Dorsolateral prefrontal cortex (tissue), 120 donors: ENCODE measurements at regions of chr4 and their contacts with region 1.

Region 1: DNA sequence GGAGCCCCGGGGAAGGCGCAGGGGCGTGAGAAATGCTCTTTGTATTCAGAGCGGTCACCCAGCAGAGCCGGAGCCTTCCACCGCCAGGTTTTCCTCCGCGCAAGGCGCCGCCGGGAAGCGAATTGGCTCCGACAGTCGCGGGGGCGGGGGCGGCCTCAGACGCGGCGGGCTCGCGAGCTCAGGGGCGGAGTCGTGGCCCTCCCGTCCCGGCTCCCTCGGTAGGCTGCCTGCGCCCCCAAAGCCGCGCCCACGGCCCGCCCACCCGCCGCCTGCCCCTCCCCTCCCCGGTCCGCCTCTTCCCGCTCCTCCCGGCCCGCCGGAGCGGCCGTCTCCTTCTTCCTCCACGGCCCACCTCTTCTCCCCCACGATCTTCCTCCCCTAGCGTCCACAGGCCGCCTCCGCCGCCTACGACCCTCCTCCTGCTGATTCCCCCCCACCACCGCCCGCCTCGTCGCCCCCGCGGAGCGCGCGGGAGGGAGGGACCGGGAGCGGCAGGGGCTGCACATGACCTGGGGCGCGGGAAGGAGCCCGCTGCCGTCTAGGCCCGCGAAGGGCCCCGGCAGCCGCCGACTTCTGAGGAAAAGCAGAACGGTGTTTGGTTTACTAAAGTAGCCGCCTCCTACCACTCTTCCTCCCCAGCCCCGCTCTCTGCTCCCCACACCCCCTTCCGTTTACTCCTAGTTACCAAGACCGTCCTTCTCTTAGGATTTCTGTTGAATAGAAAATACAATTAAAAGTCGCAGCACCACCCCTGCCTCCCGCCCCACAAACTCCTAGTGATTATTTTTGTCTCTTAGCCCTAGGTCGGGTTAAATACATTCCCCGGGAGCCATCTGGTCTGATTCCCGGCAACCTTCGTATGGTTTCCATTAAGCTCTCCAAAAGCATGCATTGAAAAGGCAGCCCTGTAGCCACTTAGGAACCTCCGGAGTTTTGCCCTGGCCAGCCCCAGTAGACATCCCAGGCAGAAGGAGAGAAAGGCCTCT is 53.2 kb downstream of the C4orf51 start:
- DNase-seq: peak; percentile 88 to 97 (median 92)
- H3K4me3 ChIP-seq: peak overlapping the region; percentile 40 to 90 (median 69)
- H3K27ac ChIP-seq: peak overlapping the region; percentile 79 to 98 (median 94)
- H3K27me3 ChIP-seq: no peaks in the 10 kb centered on the region
- CTCF ChIP-seq: peak in 45 of 56 donors; percentile 1 to 59 (median 34)

Region 2: DNA sequence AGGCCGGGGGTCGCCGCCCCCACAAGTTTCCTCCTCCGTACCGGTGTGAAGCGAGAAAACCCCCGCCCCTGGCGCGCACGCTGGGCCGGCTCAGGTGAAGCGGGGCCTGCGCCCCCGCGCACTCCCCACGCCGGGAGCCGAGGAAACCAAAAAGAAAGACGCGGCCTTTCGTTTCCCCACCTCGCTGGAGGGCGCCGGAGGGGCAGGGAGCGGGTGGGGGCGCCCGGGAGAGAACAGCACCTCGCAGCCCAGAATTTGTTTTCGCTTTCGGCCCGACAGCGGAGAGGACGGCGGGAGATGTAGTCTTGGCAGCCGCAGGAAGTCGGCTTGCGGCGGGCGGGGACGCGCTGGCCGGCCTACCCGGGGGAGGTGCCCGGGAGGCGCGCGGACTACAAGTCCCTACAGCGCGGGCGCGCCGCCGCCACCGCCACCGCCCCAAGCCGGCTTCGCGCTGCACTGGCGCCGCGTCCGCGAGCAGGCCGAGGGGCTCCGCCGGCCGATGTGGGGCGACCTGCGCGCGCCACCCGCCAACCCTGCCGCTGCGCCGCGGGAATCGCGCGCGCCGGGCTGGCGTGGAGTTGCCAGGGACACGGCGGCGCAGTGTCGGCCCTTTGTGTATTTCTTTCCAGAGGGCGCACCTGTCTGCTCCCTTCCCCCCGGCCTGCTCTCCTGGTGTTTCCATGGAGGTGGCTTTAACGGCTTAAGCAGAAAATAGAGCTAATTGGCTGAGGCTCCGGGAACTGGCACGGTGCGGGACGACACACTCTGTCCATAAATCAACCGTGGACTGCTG is 552.7 kb before region 1 on chr4 and contains the start of gene OTUD4:
- intact Hi-C with region 1: loop called in 1 of 2 experiments (anchors 2 kb)
- DNase-seq: peak; percentile 87 to 97 (median 94)
- H3K4me3 ChIP-seq: peak within 1 kb of the TSS; percentile 63 to 94 (median 83)
- H3K27ac ChIP-seq: peak within 1 kb of the TSS; percentile 85 to 99 (median 95)
- H3K27me3 ChIP-seq: no peaks in the 10 kb centered on the region
- CTCF ChIP-seq: peak in 39 of 56 donors; percentile 7 to 59 (median 32)
- total RNA-seq, gene OTUD4: 33.5 to 84.1 (median 49.7) TPM

Region 3: GRCh38 chr4:145819853-145820181 is 86.6 kb after region 1 on chr4:
- intact Hi-C with region 1: loop called in 1 of 2 experiments (anchors 10 kb)
- DNase-seq: peak in 9 of 10 donors; percentile 25 to 84 (median 70)
- H3K4me3 ChIP-seq: peak overlapping the region in 55 of 59 donors; percentile 6 to 59 (median 33)
- H3K27ac ChIP-seq: peak overlapping the region in 53 of 59 donors; percentile 1 to 92 (median 54)
- H3K27me3 ChIP-seq: no peaks in the 10 kb centered on the region
- CTCF ChIP-seq: peak in 28 of 56 donors; percentile 5 to 49 (median 23)

Region 4: DNA sequence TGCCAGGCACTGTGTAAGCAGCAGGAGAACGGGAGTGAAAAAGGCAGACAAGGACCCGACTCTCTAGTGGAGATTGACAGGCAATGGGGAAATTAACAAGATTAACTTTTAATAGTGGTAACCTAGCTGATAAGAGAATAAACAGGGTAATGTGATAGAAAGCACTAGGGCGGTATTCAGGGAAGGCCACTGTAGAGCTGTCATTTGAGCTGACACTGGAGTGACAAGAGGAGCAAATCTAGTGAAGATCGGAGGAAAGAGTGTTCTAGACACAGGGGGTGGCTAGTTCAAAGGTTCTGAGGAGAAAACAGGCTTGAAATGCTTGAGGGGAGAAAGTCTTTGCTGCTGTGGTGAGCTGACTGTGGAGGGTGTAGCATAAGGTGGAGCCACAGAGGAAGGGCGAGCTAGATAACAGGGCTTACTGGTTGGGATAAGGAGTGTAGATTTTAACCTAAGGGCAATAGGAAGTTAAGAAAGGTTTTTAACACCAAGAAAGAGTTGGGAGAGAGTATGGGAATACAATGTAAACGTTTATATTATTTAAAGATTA is 665.8 kb after region 1 on chr4:
- intact Hi-C with region 1: no loop called
- DNase-seq: no peak
- H3K4me3 ChIP-seq: no peak overlapping the region
- H3K27ac ChIP-seq: no peak overlapping the region
- H3K27me3 ChIP-seq: no peaks in the 10 kb centered on the region
- CTCF ChIP-seq: no peak